AG04449 (cell line): ENCODE measurements at regions of chr4 and their contacts with region 1.

Region 1: GRCh38 chr4:7843831-7844593 is 95.6 kb downstream of the AFAP1 start:
- DNase-seq: peak; percentile 41
- H3K4me3 ChIP-seq: no peak overlapping the region
- CTCF ChIP-seq: peak; percentile 72

Region 2: DNA sequence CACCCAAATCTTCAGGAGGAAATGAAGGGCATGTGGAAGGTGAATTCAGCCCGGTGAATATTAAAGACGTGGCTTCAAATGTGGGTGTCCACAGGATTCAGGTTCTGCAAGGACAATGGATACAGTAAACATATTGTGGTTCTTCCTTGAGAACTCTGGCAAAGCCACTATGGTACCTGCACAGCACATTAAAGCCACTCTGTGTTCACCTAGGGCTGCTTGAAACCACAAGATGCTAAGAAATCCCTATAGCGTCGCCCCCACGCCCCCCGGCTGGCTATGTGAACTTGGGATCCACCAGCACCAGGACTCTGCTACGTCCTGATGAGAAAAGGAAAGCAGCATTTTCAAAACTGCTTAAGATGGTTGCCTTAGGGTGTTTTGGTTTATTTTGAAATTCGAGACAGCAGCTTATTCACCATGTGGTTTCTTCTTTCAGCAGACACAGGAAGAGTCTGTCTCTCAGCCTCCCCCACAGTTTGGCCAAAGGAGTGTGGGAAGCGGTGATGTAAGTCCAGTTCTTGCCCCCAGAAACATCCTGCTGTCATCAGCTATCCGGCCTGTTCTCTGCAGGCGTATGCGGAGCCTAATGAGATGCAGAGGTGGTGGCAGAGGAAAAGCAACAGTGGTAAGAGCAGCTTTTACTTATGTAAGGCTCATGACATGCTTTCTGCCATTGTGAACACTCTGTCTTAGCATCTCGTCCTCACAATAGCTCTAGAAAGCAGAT is 15.9 kb before region 1 on chr4:
- CTCF ChIA-PET with region 1: interaction called, 33 read pairs
- POLR2A ChIA-PET with region 1: interaction called, 19 read pairs
- DNase-seq: peak; percentile 99
- H3K4me3 ChIP-seq: peak overlapping the region; percentile 40
- CTCF ChIP-seq: no peak

Region 3: GRCh38 chr4:7857238-7857701 is 13.3 kb after region 1 on chr4:
- CTCF ChIA-PET with region 1: interaction called, 7 read pairs
- POLR2A ChIA-PET with region 1: interaction called, 11 read pairs
- DNase-seq: peak; percentile 98
- H3K4me3 ChIP-seq: no peak overlapping the region
- CTCF ChIP-seq: no peak

Region 4: GRCh38 chr4:7998447-7998846 is 154.4 kb after region 1 on chr4:
- CTCF ChIA-PET with region 1: no interaction called
- POLR2A ChIA-PET with region 1: no interaction called
- DNase-seq: no peak
- H3K4me3 ChIP-seq: no peak overlapping the region
- CTCF ChIP-seq: no peak

Region 5: GRCh38 chr4:8128100-8128856 is 284.3 kb after region 1 on chr4:
- CTCF ChIA-PET with region 1: no interaction called
- POLR2A ChIA-PET with region 1: no interaction called
- DNase-seq: no peak
- H3K4me3 ChIP-seq: no peak overlapping the region
- CTCF ChIP-seq: no peak